AG04450 (cell line): ENCODE measurements at regions of chr18 and their contacts with region 1.

Region 1: GRCh38 chr18:58781627-58782194 is 83.0 kb upstream of the ZNF532 start:
- DNase-seq: no peak
- H3K4me3 ChIP-seq: no peak overlapping the region
- H3K27ac ChIP-seq: no peak overlapping the region
- H3K27me3 ChIP-seq: no peaks in the 10 kb centered on the region
- CTCF ChIP-seq: peak; percentile 86

Region 2: GRCh38 chr18:59056706-59057492 is 275.2 kb after region 1 on chr18:
- CTCF ChIA-PET with region 1: interaction called, 15 read pairs
- POLR2A ChIA-PET with region 1: no interaction called
- DNase-seq: peak; percentile 15
- H3K4me3 ChIP-seq: no peak overlapping the region
- H3K27ac ChIP-seq: no peak overlapping the region
- H3K27me3 ChIP-seq: no peaks in the 10 kb centered on the region
- CTCF ChIP-seq: peak; percentile 82

Region 3: GRCh38 chr18:59063300-59063906 is 281.7 kb after region 1 on chr18:
- CTCF ChIA-PET with region 1: interaction called, 164 read pairs
- POLR2A ChIA-PET with region 1: no interaction called
- DNase-seq: no peak
- H3K4me3 ChIP-seq: no peak overlapping the region
- H3K27ac ChIP-seq: no peak overlapping the region
- H3K27me3 ChIP-seq: no peaks in the 10 kb centered on the region
- CTCF ChIP-seq: no peak